Vagina (tissue), 2 donors: ENCODE measurements at regions of chr17 and their contacts with region 1.

Region 1: GRCh38 chr17:42112552-42113176 is at the start of gene DHX58:
- DNase-seq: no peak
- H3K4me3 ChIP-seq: peak within 1 kb of the TSS; percentile 51 to 59
- H3K27ac ChIP-seq: peak within 1 kb of the TSS; percentile 92
- H3K4me1 ChIP-seq: peaks cover 30% of the 10 kb centered on the region
- H3K27me3 ChIP-seq: no peaks in the 10 kb centered on the region
- CTCF ChIP-seq: peak in 1 of 3 experiments; percentile 24
- POLR2A ChIP-seq: peak in 1 of 2 donors; percentile 72
- total RNA-seq, gene DHX58: 8.1 TPM

Region 2: GRCh38 chr17:41966463-41967140 is 146.1 kb before region 1 on chr17 and contains the start of gene CNP:
- intact Hi-C with region 1: loop called (anchors 5 kb)
- DNase-seq: no peak
- H3K4me3 ChIP-seq: peak within 1 kb of the TSS; percentile 75 to 87
- H3K27ac ChIP-seq: peak within 1 kb of the TSS; percentile 92
- H3K4me1 ChIP-seq: peaks cover 58% of the 10 kb centered on the region
- H3K27me3 ChIP-seq: no peaks in the 10 kb centered on the region
- CTCF ChIP-seq: no peak
- POLR2A ChIP-seq: peak in 1 of 2 donors; percentile 61
- total RNA-seq, gene CNP: 54.0 TPM

Region 3: DNA sequence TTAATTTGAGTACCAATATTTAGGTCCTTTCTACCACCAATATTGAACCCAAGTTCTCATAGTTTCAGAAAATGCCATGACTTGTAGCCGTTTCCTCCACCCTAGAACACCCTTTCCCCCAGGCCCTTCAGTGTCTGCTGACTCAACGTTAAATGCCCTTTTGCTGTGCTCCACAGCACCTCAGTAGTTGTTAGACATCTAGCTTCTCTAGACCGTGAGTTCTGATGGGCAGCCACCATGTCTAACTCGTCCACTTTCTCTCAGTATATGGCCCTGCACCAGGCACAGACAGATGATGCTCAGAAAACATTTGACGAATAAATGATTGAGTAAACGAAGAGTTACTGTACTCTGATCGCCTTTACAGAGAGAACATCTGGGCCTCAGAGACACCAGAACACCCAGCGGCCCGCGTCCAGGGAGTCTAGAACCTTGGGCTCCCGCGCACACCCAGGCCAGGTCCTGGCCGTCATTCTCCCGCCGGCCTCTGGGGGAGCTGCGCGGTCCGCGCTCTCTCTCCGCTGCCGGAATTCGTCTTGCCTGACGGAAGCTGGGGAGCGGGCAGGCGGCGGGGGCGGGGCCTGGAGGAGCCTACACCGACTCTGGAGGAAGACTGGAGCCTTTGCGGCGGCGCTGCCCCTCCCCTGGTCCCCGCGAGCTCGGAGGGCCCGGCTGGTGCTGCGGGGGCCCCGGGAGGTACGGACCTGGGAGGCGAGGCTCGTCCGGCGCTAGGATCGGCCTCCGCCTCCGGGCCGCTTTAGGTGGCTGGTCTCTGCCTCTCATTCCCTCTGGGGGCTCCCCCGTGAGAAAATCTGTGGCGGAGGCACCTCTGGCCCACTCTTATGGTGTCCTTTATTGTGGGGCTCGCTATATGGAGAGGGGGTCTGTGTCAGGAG is 92.9 kb before region 1 on chr17 and contains the start of gene NKIRAS2:
- intact Hi-C with region 1: loop called (anchors 2 kb)
- DNase-seq: peak in 1 of 2 donors; percentile 91
- H3K4me3 ChIP-seq: peak within 1 kb of the TSS; percentile 74 to 89
- H3K27ac ChIP-seq: peak within 1 kb of the TSS; percentile 91
- H3K4me1 ChIP-seq: peaks cover 43% of the 10 kb centered on the region
- H3K27me3 ChIP-seq: no peaks in the 10 kb centered on the region
- CTCF ChIP-seq: peak; percentile 79 to 95 (median 83)
- POLR2A ChIP-seq: peak in 1 of 2 donors; percentile 30
- total RNA-seq, gene NKIRAS2: 28.7 TPM

Region 4: GRCh38 chr17:42067351-42068091 is 45.1 kb before region 1 on chr17:
- intact Hi-C with region 1: loop called (anchors 5 kb)
- DNase-seq: no peak
- H3K4me3 ChIP-seq: no peak overlapping the region
- H3K27ac ChIP-seq: no peak overlapping the region
- H3K4me1 ChIP-seq: peaks cover 18% of the 10 kb centered on the region
- H3K27me3 ChIP-seq: peaks cover 5% of the 10 kb centered on the region
- CTCF ChIP-seq: peak; percentile 77 to 85 (median 79)
- POLR2A ChIP-seq: no peak